IMR-90 (cell line): ENCODE measurements at regions of chr3 and their contacts with region 1.

Region 1: GRCh38 chr3:173993299-173993698 is 595.8 kb downstream of the NLGN1 start:
- DNase-seq: peak; percentile 58
- ATAC-seq: peak; percentile 88
- H3K4me3 ChIP-seq: no peak overlapping the region
- H3K27ac ChIP-seq: no peak overlapping the region
- H3K4me1 ChIP-seq: peaks cover 4% of the 10 kb centered on the region; the same call in 1 of the 2 replicates
- H3K27me3 ChIP-seq: no peaks in the 10 kb centered on the region
- CTCF ChIP-seq: peak; percentile 47
- POLR2A ChIP-seq: no peak
- RAD21 ChIP-seq: peak; percentile 48

Region 2: DNA sequence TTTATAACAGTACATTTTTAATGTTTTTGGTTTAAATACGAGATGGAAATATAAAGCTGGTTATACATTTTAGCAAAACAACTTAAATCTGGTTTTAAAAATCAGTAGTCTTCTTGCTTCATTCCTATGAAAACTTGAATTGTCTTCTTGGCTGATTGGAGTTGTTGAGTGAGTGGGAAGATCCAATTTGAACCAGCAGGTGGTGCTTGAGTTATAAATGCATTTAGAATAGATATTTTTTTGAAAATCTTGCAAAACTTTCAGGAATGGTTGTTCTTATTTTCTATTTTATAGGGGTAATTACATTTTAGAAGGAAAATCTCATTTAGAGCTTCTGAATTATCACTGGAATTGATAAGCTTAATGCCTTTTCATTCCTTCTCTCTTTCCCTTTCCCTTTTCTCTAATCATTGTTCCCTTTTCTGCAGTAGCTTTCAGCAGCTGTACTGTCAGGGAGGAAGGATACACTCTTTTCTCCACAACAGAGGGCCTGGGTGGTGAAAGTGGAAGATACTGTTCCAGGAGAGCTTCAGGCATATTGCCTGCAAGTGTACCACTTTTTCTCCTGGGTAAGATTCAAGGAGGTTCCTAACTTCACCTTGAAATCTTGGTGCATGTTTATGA is 260.2 kb before region 1 on chr3:
- CTCF ChIA-PET with region 1: no interaction called
- POLR2A ChIA-PET with region 1: no interaction called
- dilution Hi-C with region 1: no loop called
- in situ Hi-C with region 1: no loop called
- intact Hi-C with region 1: loop called (anchors 5 kb)
- DNase-seq: peak; percentile 64
- ATAC-seq: no peak
- H3K4me3 ChIP-seq: no peak overlapping the region
- H3K27ac ChIP-seq: no peak overlapping the region
- H3K4me1 ChIP-seq: peaks cover 2% of the 10 kb centered on the region; the same call in 1 of the 2 replicates
- H3K27me3 ChIP-seq: no peaks in the 10 kb centered on the region
- CTCF ChIP-seq: peak; percentile 50
- POLR2A ChIP-seq: no peak
- RAD21 ChIP-seq: peak; percentile 38

Region 3: GRCh38 chr3:174062923-174063322 is 69.6 kb after region 1 on chr3:
- CTCF ChIA-PET with region 1: no interaction called
- POLR2A ChIA-PET with region 1: no interaction called
- dilution Hi-C with region 1: no loop called
- in situ Hi-C with region 1: no loop called
- intact Hi-C with region 1: no loop called
- DNase-seq: no peak
- ATAC-seq: no peak
- H3K4me3 ChIP-seq: no peak overlapping the region
- H3K27ac ChIP-seq: no peak overlapping the region
- H3K4me1 ChIP-seq: no peaks in the 10 kb centered on the region
- H3K27me3 ChIP-seq: no peaks in the 10 kb centered on the region
- CTCF ChIP-seq: no peak
- POLR2A ChIP-seq: no peak
- RAD21 ChIP-seq: no peak